Aorta (tissue), 5 donors: ENCODE measurements at regions of chr14 and their contacts with region 1.

Region 1: DNA sequence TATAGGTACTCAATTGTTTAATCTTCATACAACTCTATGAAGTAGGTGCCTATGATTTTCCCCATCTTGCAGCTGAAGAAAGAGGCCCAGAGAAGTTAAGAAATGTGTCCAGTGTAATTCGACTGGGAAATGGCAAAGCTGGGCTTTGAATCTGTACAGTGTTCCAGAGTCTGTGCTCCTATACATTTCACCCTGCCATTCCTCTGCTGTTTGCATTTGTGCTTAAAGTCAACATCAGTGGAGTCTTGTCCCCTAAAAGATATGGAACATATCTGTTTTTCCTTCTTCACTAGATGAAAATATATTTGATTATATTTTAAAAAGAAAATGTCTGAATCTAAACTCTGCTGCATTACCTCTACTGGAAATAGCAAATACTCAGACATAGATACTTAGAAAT is 88.6 kb downstream of the SEC23A start:
- DNase-seq: no peak
- ATAC-seq: no peak
- H3K4me3 ChIP-seq: no peak overlapping the region
- H3K27ac ChIP-seq: no peak overlapping the region
- H3K4me1 ChIP-seq: no peaks in the 10 kb centered on the region
- H3K27me3 ChIP-seq: no peaks in the 10 kb centered on the region

Region 2: DNA sequence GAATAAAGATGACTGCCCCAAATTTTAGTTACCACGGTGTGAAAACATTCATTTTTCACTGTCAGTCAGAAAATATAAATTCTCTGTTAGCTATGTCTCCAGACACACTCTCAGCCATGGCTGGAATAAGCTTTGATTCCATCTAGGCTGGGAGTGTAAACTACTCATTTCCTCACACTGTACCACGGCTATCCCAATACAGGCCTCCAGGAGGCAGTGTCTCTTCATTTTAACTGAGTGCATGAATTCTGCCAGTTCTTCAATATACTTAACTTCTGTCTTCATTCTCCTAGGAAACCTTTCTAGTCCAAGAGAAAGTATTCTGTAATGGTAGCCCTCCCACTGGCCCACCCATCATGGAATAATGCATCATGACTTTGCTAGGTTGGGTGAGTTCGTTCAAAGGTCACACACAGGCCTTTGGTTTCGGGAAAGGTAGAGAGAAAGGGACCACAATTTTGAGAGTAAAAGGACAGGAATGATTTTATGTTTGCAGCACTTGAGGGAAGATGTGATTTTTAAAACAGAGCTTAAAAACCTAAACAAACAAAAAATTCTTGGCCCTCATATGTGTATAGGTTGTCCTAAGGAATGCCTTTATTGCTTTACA is 292.5 kb before region 1 on chr14:
- intact Hi-C with region 1: loop called (anchors 5 kb)
- DNase-seq: peak; percentile 69 to 71
- ATAC-seq: peak; percentile 86
- H3K4me3 ChIP-seq: no peak overlapping the region
- H3K27ac ChIP-seq: no peak overlapping the region
- H3K4me1 ChIP-seq: peaks cover 0 to 1% of the 10 kb centered on the region in 2 donors
- H3K27me3 ChIP-seq: no peaks in the 10 kb centered on the region

Region 3: GRCh38 chr14:38727731-38728130 is 286.7 kb before region 1 on chr14:
- intact Hi-C with region 1: loop called (anchors 5 kb)
- DNase-seq: no peak
- ATAC-seq: no peak
- H3K4me3 ChIP-seq: no peak overlapping the region
- H3K27ac ChIP-seq: no peak overlapping the region
- H3K4me1 ChIP-seq: peaks cover 0 to 1% of the 10 kb centered on the region in 2 donors
- H3K27me3 ChIP-seq: no peaks in the 10 kb centered on the region

Region 4: GRCh38 chr14:38743966-38744584 is 270.4 kb before region 1 on chr14:
- intact Hi-C with region 1: no loop called
- DNase-seq: no peak
- ATAC-seq: no peak
- H3K4me3 ChIP-seq: no peak overlapping the region
- H3K27ac ChIP-seq: no peak overlapping the region
- H3K4me1 ChIP-seq: no peaks in the 10 kb centered on the region
- H3K27me3 ChIP-seq: no peaks in the 10 kb centered on the region